Right cardiac atrium (tissue), 5 donors: ENCODE measurements at regions of chr19 and their contacts with region 1.

Region 1: GRCh38 chr19:2739602-2740313 is at the start of gene SLC39A3:
- DNase-seq: peak; percentile 98 to 99 (median 99)
- ATAC-seq: peak; percentile 100
- H3K4me3 ChIP-seq: peak within 1 kb of the TSS; percentile 93
- H3K27ac ChIP-seq: no peak within 1 kb of the TSS
- H3K4me1 ChIP-seq: peaks cover 3% of the 10 kb centered on the region
- H3K27me3 ChIP-seq: no peaks in the 10 kb centered on the region
- total RNA-seq, gene SLC39A3: 19.9 to 25.5 (median 23.4) TPM

Region 2: DNA sequence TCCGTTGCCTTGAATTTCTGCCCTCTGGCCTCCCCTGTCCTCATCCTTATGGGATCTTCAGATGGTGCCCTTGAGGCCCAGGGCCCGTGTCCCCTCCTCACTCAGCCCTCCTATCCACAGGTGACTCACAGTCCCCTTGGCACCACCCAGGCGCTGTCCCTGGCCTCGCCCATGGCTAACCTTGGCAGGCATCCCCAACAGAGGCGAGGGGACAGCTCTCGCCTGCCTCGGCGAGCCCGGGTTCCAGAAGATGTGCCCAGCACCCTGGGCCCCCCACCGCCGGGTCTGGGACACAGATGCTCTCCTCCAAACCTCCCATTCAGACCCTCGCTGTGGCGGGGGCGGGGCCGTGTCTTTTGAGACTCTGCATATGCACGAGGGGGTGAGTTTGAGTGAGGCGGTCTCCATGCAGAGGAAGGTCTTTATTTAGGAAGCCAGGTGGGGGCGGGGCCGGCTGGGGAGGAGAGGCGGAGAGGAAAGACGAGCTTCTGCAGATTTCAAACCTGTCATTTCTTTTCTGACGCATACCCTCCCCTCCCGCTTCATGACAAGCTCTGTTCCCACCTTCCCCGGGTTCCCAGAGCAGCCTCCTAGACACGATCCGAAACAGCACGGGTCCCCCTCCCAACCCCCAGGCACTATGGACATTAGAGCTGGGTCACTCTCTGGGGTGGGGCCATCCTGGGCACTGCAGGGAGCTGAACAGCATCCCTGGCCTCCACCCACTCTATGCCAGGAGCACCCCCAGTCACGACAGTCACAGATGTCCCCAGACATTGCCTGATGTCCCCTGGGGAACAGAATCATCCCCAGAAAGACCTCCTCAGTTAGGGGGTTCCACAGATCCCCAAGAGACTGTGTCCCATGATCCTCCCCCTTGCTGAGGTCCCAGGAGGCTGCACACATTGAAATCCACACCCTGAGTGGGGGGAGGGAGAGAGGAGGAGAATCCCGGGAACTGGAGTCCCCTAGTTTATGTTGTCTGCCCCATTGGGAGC is 85.7 kb before region 1 on chr19:
- intact Hi-C with region 1: loop called in 1 of 4 experiments (anchors 10 kb)
- DNase-seq: peak in 1 of 3 donors; percentile 63
- ATAC-seq: peak in 1 of 2 donors; percentile 28
- H3K4me3 ChIP-seq: no peak overlapping the region
- H3K27ac ChIP-seq: no peak overlapping the region
- H3K4me1 ChIP-seq: no peaks in the 10 kb centered on the region
- H3K27me3 ChIP-seq: no peaks in the 10 kb centered on the region

Region 3: GRCh38 chr19:2820112-2820702 is 80.4 kb after region 1 on chr19:
- intact Hi-C with region 1: no loop called
- DNase-seq: peak; percentile 42 to 71 (median 55)
- ATAC-seq: peak; percentile 15 to 20
- H3K4me3 ChIP-seq: peak overlapping the region; percentile 86
- H3K27ac ChIP-seq: no peak overlapping the region
- H3K4me1 ChIP-seq: peaks cover 2% of the 10 kb centered on the region
- H3K27me3 ChIP-seq: no peaks in the 10 kb centered on the region

Region 4: DNA sequence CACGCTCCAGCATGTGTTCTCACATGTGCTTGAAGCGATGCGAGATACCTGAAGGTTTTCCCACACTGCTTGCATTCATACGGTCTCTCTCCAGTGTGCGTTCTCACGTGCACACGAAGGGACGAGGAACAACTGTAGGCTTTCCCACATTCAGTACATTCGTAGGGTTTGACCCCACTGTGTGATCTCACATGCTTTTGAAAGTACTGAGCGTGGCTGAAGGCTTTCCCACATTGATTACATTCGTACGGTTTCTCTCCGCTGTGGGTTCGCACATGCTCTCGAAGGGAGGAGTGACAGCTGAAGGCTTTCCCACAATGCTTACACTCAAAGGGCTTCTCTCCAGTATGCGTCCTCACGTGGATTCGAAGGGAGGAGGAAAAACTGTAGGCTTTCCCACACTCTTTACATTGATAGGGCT is 193.7 kb after region 1 on chr19:
- intact Hi-C with region 1: loop called in 1 of 4 experiments (anchors 10 kb)
- DNase-seq: no peak
- ATAC-seq: no peak
- H3K4me3 ChIP-seq: no peak overlapping the region
- H3K27ac ChIP-seq: no peak overlapping the region
- H3K4me1 ChIP-seq: no peaks in the 10 kb centered on the region
- H3K27me3 ChIP-seq: no peaks in the 10 kb centered on the region